ENCODE measurements at regions of chr14 and their contacts with region 1.

Region 1: DNA sequence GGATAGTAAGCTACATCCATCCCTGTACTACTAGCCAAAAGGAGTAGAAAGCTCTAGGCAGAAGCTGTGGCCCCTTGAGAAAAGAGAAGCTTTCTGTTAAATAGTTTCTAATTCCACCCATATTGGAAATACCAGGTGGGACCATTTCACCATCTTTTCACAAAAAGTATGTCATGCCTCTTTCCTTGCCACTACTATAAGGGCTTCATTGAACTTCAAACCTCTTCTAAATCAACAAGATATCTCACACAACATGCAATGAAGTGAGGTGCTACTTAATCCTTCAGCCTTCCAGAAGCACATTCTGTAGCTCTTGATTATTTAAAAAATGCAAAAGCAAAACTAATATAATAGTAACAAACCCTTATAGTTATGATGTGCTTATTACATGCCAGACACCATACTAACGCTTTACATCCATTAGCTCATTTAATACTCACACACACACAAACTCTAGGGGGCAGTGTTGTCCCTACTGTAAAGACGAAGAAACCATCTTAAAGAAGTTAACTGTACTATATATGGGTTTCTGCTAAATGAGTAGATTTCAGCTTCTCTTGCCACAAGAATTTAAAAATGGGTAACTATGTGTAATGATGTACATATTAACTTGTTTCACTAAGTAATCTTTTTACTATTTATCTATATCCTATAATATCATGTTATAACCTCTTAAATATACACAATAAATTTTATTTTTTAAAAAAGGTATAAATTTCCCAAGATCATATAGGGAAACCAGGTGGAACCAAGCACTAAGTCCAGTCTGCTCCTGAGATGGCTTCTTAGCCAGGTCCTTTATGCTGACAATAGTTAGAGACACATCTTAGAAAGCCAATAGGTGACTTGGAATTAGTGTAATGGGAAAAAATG is 124.4 kb downstream of the RPS29 start:
- DNase-seq: peak; percentile 43
- ATAC-seq: peak; percentile 98
- H3K4me3 ChIP-seq: no peak overlapping the region
- H3K27ac ChIP-seq: no peak overlapping the region
- H3K4me1 ChIP-seq: no peaks in the 10 kb centered on the region
- H3K27me3 ChIP-seq: no peaks in the 10 kb centered on the region
- CTCF ChIP-seq: peak; percentile 64 to 80 (median 66)
- EP300 ChIP-seq: no peak
- POLR2A ChIP-seq: no peak
- RAD21 ChIP-seq: peak; percentile 84

Region 2: DNA sequence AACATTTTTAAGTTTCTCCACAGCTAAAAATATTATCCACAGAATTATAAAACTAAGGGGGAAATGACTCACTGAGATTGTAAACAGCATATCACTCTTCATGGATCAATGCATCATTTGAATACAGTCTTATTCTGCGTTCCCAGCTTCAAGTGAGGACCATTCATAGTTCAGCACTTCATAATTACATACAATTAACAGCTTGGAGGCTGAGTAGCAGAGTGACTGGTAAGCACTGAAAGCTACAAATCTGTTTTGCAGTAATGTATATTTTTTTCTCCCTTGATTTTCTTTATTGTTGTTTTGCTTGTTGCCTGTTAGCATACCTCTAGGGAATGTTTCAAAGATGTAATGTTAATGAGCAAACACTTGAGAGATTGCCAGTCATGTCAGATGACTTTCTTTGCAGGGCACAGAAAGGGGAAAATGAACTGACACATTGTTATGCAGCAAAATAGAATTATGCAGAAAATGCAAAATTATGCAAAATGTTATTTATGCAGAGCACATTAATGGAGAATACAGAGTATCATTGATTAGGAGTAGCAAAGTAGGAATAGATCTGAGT is 14.1 kb before region 1 on chr14:
- CTCF ChIA-PET with region 1: interaction called, 23 read pairs
- POLR2A ChIA-PET with region 1: no interaction called
- RAD21 ChIA-PET with region 1: interaction called, 5 read pairs
- SMC1A ChIA-PET with region 1: interaction called, 9 read pairs
- in situ Hi-C with region 1: no loop called
- intact Hi-C with region 1: no loop called
- DNase-seq: no peak
- ATAC-seq: no peak
- H3K4me3 ChIP-seq: no peak overlapping the region
- H3K27ac ChIP-seq: no peak overlapping the region
- H3K4me1 ChIP-seq: no peaks in the 10 kb centered on the region
- H3K27me3 ChIP-seq: no peaks in the 10 kb centered on the region; a peak in 1 of 4 replicates
- CTCF ChIP-seq: no peak
- EP300 ChIP-seq: no peak
- POLR2A ChIP-seq: no peak
- RAD21 ChIP-seq: no peak

Region 3: DNA sequence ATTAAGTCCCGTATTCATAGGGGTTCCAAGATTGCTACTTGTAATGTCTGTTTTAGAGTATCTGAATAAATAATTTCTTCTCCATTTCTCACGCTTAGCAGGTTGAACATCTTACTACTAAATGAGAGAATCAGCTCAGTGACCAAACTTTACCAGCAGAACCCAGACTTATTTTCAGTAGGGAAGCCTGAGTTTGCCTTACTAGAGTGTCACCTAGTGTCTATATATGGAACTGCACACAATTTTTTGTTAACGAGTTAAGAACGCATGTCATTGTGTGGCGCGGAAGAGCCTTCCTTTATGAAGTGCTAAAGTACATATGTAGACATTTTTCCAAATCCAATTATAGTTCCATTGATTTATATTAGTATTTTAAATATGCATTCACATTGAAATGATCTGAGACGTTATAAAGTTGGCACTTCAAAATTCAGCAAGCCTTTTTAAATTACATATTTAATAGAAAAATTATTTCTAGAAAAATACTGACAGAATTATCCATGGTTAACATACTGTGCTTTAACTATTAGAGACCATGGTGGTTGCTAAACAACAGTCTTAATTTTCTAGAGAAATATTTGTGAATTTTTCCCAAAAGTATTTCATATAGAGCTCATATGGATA is 36.1 kb after region 1 on chr14:
- CTCF ChIA-PET with region 1: interaction called, 4 read pairs
- POLR2A ChIA-PET with region 1: no interaction called
- RAD21 ChIA-PET with region 1: interaction called, 36 read pairs
- SMC1A ChIA-PET with region 1: interaction called, 54 read pairs
- in situ Hi-C with region 1: no loop called
- intact Hi-C with region 1: loop called (anchors 1 kb)
- DNase-seq: peak; percentile 21
- ATAC-seq: peak; percentile 91
- H3K4me3 ChIP-seq: no peak overlapping the region
- H3K27ac ChIP-seq: no peak overlapping the region
- H3K4me1 ChIP-seq: no peaks in the 10 kb centered on the region
- H3K27me3 ChIP-seq: peaks cover 0 to 4% of the 10 kb centered on the region in 2 experiments; a peak in 1 of 4 replicates
- CTCF ChIP-seq: peak; percentile 79 to 87 (median 81)
- EP300 ChIP-seq: no peak
- POLR2A ChIP-seq: no peak
- RAD21 ChIP-seq: peak; percentile 80

Region 4: DNA sequence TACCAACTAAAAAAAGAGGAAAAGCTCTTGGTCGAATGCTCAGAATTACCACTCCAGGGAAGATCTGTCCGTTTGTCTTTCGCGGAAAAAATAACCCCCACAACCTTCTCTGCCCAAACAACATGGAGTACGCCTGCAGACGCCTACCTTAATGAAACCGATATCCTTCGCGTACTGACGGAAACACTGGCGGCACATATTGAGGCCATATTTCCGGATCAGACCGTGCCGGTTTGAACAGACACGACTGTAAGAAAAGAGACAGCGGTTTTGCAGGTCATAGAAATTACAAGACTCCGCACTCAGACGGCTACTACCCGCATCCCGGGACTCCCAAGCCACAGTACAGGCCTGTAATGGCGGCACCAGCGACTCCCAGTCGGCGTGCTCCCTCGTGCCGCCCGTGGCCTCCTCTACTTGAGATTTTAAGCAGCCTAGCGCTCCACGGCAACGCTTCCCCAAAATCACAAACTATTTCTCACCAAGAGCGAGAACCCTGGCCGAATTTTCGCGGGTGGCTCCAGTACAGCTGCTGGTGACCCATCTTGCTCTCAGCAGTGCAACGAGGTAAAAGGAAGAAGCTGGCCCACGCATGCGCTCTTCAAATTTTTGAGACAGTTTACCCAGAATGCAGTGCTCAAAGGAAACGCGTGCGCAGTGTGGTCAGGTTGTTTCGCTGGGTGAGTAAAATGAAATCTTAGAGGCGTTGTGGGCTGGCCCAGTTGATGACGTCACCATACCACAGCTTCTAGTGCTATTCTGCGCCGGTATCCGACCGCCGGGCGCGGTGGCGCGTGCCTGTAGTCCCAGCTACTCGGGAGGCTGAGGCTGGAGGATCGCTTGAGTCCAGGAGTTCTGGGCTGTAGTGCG is 124.3 kb after region 1 on chr14 and contains the start of gene RPS29:
- CTCF ChIA-PET with region 1: interaction called, 25 read pairs
- POLR2A ChIA-PET with region 1: interaction called, 3 read pairs
- RAD21 ChIA-PET with region 1: interaction called, 22 read pairs
- SMC1A ChIA-PET with region 1: interaction called, 6 read pairs
- in situ Hi-C with region 1: no loop called
- intact Hi-C with region 1: loop called (anchors 5 kb)
- DNase-seq: peak; percentile 99
- ATAC-seq: peak; percentile 84
- H3K4me3 ChIP-seq: peak within 1 kb of the TSS; percentile 90
- H3K27ac ChIP-seq: peak within 1 kb of the TSS; percentile 99
- H3K4me1 ChIP-seq: no peaks in the 10 kb centered on the region
- H3K27me3 ChIP-seq: no peaks in the 10 kb centered on the region
- CTCF ChIP-seq: no peak
- EP300 ChIP-seq: no peak; a peak in 1 of 4 replicates
- POLR2A ChIP-seq: peak; percentile 91
- RAD21 ChIP-seq: no peak
- polyA plus RNA-seq, gene RPS29: 7,374 to 7,763 TPM

Region 5: DNA sequence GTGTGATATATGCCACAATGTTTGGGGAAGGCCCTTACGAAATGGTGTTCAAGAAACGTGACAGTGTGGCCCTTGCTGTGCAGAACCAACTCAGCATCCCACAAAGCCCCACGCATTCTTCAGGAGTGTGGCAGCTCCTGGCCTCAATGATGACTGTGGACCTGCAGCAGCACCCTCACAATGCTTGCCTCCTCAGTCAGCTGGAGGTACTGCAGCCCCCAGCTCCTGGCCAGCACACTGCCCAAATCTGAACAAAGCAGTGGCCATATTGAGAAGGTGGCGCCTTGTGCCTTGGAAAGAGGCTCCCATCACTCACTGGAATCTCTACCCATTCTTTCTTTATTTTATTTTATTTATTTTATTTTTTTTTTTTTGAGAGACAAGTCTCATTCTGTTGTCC is 215.9 kb after region 1 on chr14:
- CTCF ChIA-PET with region 1: no interaction called
- POLR2A ChIA-PET with region 1: no interaction called
- RAD21 ChIA-PET with region 1: no interaction called
- SMC1A ChIA-PET with region 1: no interaction called
- in situ Hi-C with region 1: no loop called
- intact Hi-C with region 1: no loop called
- DNase-seq: no peak
- ATAC-seq: peak; percentile 84
- H3K4me3 ChIP-seq: no peak overlapping the region
- H3K27ac ChIP-seq: no peak overlapping the region
- H3K4me1 ChIP-seq: no peaks in the 10 kb centered on the region
- H3K27me3 ChIP-seq: no peaks in the 10 kb centered on the region
- CTCF ChIP-seq: peak in 2 of 3 experiments; percentile 10 to 29; a peak in 1 of 6 replicates
- EP300 ChIP-seq: no peak
- POLR2A ChIP-seq: no peak
- RAD21 ChIP-seq: no peak

Region 6: GRCh38 chr14:49767562-49768300 is 306.0 kb after region 1 on chr14 and contains the start of gene KLHDC2:
- CTCF ChIA-PET with region 1: interaction called, 6 read pairs
- POLR2A ChIA-PET with region 1: no interaction called
- RAD21 ChIA-PET with region 1: interaction called, 7 read pairs
- SMC1A ChIA-PET with region 1: interaction called, 4 read pairs
- in situ Hi-C with region 1: loop called (anchors 25 kb)
- intact Hi-C with region 1: no loop called
- DNase-seq: no peak
- ATAC-seq: peak; percentile 94
- H3K4me3 ChIP-seq: peak within 1 kb of the TSS; percentile 93
- H3K27ac ChIP-seq: peak within 1 kb of the TSS; percentile 93
- H3K4me1 ChIP-seq: peaks cover 7% of the 10 kb centered on the region
- H3K27me3 ChIP-seq: no peaks in the 10 kb centered on the region
- CTCF ChIP-seq: peak in 1 of 3 experiments; percentile 54; a peak in 2 of 6 replicates
- EP300 ChIP-seq: no peak
- POLR2A ChIP-seq: peak; percentile 81
- RAD21 ChIP-seq: no peak
- polyA plus RNA-seq, gene KLHDC2: 6.0 to 13.3 TPM